ENCODE measurements at regions of chr7 and their contacts with region 1.

Region 1: GRCh38 chr7:36291387-36292316 is 98.0 kb upstream of the ANLN start:
- DNase-seq: no peak
- ATAC-seq: peak; percentile 83
- H3K4me3 ChIP-seq: peak overlapping the region; percentile 35; the same call in 1 of the 2 replicates
- H3K27ac ChIP-seq: no peak overlapping the region
- H3K4me1 ChIP-seq: peaks cover 12% of the 10 kb centered on the region
- H3K27me3 ChIP-seq: no peaks in the 10 kb centered on the region
- CTCF ChIP-seq: peak; percentile 93 to 98 (median 96); a peak in 5 of 6 replicates
- EP300 ChIP-seq: no peak
- POLR2A ChIP-seq: no peak
- RAD21 ChIP-seq: peak; percentile 99

Region 2: GRCh38 chr7:36021367-36021766 is 270.3 kb before region 1 on chr7:
- CTCF ChIA-PET with region 1: interaction called, 21 read pairs
- POLR2A ChIA-PET with region 1: no interaction called
- RAD21 ChIA-PET with region 1: interaction called, 14 read pairs
- SMC1A ChIA-PET with region 1: interaction called, 15 read pairs
- in situ Hi-C with region 1: no loop called
- intact Hi-C with region 1: no loop called
- DNase-seq: no peak
- ATAC-seq: 0 out of 3 replicates have a peak, but pooled peaks have one; percentile 37
- H3K4me3 ChIP-seq: no peak overlapping the region
- H3K27ac ChIP-seq: no peak overlapping the region
- H3K4me1 ChIP-seq: no peaks in the 10 kb centered on the region
- H3K27me3 ChIP-seq: no peaks in the 10 kb centered on the region
- CTCF ChIP-seq: peak; percentile 39 to 54 (median 42); a peak in 5 of 6 replicates
- EP300 ChIP-seq: no peak
- POLR2A ChIP-seq: no peak
- RAD21 ChIP-seq: peak; percentile 57

Region 3: GRCh38 chr7:36152756-36153570 is 138.7 kb before region 1 on chr7 and contains the start of gene EEPD1:
- CTCF ChIA-PET with region 1: interaction called, 6 read pairs
- POLR2A ChIA-PET with region 1: no interaction called
- RAD21 ChIA-PET with region 1: interaction called, 5 read pairs
- SMC1A ChIA-PET with region 1: interaction called, 10 read pairs
- in situ Hi-C with region 1: no loop called
- intact Hi-C with region 1: loop called (anchors 1 kb)
- DNase-seq: peak; percentile 87
- ATAC-seq: peak; percentile 97
- H3K4me3 ChIP-seq: peak within 1 kb of the TSS; percentile 76
- H3K27ac ChIP-seq: no peak within 1 kb of the TSS
- H3K4me1 ChIP-seq: peaks cover 3% of the 10 kb centered on the region
- H3K27me3 ChIP-seq: peaks cover 0 to 2% of the 10 kb centered on the region in 2 experiments; a peak in 2 of 4 replicates
- CTCF ChIP-seq: no peak
- EP300 ChIP-seq: no peak
- POLR2A ChIP-seq: peak; percentile 40; the same call in 1 of the 2 replicates
- RAD21 ChIP-seq: no peak
- polyA plus RNA-seq, gene EEPD1: 0.24 TPM in 1 of 2 experiments, not detected in the other

Region 4: DNA sequence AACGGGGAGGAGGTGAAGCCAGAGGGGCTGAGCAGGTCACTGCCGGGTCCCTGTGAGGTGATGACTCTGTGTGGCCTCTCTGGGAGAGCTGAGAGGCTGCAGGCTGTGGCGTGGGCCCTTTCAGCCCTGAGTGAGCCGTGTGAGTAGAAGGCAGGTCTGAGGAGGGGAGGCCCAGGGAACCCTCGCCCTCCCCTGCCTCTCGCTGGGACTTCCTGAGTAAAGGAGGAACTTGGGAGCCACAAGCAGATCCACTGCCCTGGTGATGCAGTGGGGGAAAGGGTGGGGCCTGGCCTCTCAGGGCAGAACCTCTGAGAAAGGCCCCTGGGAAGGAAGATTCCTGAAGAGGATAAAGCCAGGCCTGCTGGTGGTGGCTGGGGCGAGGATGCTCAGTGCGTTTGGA is 115.8 kb before region 1 on chr7:
- CTCF ChIA-PET with region 1: interaction called, 5 read pairs
- POLR2A ChIA-PET with region 1: no interaction called
- RAD21 ChIA-PET with region 1: interaction called, 3 read pairs
- SMC1A ChIA-PET with region 1: interaction called, 10 read pairs
- in situ Hi-C with region 1: no loop called
- intact Hi-C with region 1: no loop called
- DNase-seq: no peak
- ATAC-seq: peak; percentile 33
- H3K4me3 ChIP-seq: no peak overlapping the region
- H3K27ac ChIP-seq: no peak overlapping the region
- H3K4me1 ChIP-seq: no peaks in the 10 kb centered on the region
- H3K27me3 ChIP-seq: peaks cover 0 to 1% of the 10 kb centered on the region in 2 experiments; a peak in 2 of 4 replicates
- CTCF ChIP-seq: no peak
- EP300 ChIP-seq: no peak
- POLR2A ChIP-seq: no peak
- RAD21 ChIP-seq: no peak

Region 5: GRCh38 chr7:36264123-36264801 is 27.4 kb before region 1 on chr7:
- CTCF ChIA-PET with region 1: interaction called, 10 read pairs
- POLR2A ChIA-PET with region 1: interaction called, 4 read pairs
- RAD21 ChIA-PET with region 1: interaction called, 30 read pairs
- SMC1A ChIA-PET with region 1: interaction called, 68 read pairs
- in situ Hi-C with region 1: no loop called
- intact Hi-C with region 1: no loop called
- DNase-seq: no peak
- ATAC-seq: peak; percentile 71
- H3K4me3 ChIP-seq: no peak overlapping the region
- H3K27ac ChIP-seq: no peak overlapping the region
- H3K4me1 ChIP-seq: peaks cover 22% of the 10 kb centered on the region
- H3K27me3 ChIP-seq: no peaks in the 10 kb centered on the region
- CTCF ChIP-seq: no peak
- EP300 ChIP-seq: peak; percentile 24 to 33; a peak in 2 of 4 replicates
- POLR2A ChIP-seq: no peak
- RAD21 ChIP-seq: no peak

Region 6: DNA sequence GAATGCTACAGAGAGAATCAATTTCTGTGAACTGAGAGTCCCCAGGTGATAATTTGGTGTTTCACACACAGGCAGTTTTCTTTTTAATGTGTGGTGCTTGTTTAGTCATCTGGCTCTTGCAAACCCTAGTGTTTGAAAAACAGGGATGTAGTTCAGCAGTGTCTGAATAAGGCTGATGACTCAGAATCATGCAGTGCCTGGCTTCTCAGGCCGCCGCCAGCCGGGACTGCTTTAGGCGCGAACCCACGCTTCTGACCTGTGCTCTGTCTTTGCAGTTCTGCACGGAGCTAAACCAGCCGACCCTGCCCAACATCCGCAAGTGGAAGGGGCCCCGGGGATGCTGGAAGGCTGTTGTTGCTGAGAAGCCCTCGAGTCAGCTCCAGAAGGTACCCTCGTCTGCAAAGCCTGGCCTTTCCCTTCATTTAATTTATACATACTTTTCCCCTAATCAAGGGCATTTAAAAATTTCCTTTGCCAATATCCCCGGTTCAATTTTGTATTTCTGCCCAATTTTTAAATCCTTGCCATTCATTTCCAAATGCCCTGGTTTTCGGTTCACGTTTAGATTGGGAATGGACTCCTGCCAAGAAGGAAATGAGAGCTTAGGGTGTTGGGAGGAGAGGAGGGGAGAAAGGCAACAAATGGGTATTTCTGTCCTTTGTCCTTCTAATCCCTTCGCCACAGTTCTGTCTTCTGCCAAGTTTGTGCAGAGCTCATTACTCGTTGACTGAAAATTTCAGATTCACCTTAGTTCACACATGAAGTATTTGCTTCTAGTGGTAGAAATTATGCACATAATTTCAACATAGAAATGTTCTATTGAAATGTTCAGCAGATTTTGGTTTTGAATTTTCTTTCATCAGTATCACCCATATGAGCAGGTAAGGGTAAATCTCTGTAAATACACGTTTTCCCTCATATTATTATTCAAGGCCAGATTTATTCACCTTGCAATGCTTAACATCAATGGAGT is 10.5 kb before region 1 on chr7:
- CTCF ChIA-PET with region 1: interaction called, 14 read pairs
- POLR2A ChIA-PET with region 1: no interaction called
- RAD21 ChIA-PET with region 1: interaction called, 8 read pairs
- SMC1A ChIA-PET with region 1: interaction called, 24 read pairs
- in situ Hi-C with region 1: no loop called
- intact Hi-C with region 1: no loop called
- DNase-seq: no peak
- ATAC-seq: peak; percentile 48
- H3K4me3 ChIP-seq: no peak overlapping the region
- H3K27ac ChIP-seq: no peak overlapping the region
- H3K4me1 ChIP-seq: peaks cover 16% of the 10 kb centered on the region
- H3K27me3 ChIP-seq: no peaks in the 10 kb centered on the region; a peak in 1 of 4 replicates
- CTCF ChIP-seq: no peak
- EP300 ChIP-seq: no peak
- POLR2A ChIP-seq: no peak
- RAD21 ChIP-seq: no peak

Region 7: DNA sequence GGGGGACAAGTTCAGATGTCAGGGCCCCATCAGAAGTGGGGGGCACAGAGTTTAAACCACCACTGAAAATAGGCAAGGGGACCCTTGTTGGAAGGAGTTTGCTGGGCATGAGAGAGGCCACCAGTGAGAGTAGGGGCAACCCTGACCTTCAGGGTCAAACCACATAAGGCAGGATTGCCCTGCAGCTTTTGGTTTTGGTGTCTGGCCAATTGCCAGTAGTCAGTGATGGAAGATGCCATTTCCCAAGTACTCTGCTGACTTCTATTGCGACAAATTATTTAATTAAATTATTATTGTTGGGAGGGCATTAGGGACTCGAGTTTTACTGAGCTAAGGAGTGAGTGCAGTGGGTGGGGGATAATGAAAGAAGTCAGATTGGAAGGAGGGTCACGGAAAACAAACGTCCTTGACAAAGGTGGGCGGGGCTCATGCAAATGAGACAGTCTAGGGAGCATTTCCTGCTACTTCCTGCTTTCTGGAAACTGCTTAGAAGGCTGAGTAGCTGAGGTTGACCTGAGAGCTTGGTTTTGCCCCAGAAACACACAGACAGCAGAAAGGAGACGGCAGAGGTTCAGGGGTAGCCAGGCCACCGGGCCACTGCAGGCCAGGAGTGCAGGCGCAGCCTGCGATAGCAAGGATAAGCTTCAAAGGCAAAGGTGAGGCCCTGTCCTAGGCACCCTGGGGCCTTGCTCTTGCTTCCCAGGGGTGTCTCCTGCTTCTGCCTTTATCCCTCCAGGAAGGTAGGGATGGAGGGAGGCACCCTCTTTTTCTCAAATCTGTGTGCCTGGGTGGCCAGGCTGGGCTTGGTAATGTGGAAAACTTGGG is 23.9 kb after region 1 on chr7:
- CTCF ChIA-PET with region 1: interaction called, 19 read pairs
- POLR2A ChIA-PET with region 1: no interaction called
- RAD21 ChIA-PET with region 1: interaction called, 10 read pairs
- SMC1A ChIA-PET with region 1: interaction called, 16 read pairs
- in situ Hi-C with region 1: no loop called
- intact Hi-C with region 1: no loop called
- DNase-seq: no peak
- ATAC-seq: no peak
- H3K4me3 ChIP-seq: no peak overlapping the region
- H3K27ac ChIP-seq: no peak overlapping the region
- H3K4me1 ChIP-seq: no peaks in the 10 kb centered on the region
- H3K27me3 ChIP-seq: no peaks in the 10 kb centered on the region
- CTCF ChIP-seq: no peak
- EP300 ChIP-seq: no peak
- POLR2A ChIP-seq: no peak
- RAD21 ChIP-seq: no peak